ENCODE measurements at regions of chrX and their contacts with region 1.

Region 1: DNA sequence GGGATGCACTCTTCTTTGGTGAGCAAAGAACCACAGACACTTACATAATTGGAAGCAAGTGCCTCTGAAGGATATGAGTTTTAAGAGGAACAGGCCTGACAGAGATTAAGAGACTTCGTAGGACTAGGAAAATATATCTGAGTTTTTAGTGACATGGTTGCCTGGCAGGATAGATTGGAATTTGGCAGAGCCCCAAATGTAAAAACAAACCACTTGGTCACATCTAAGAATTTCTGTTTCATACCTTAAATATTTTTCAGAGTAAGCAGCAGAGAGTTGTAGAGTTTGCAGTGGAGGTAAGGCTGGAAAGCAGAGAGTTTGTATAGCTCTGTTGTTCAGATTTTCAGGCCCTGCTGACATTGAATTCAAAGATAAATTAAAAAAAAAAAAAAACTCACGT is 150.1 kb upstream of the MAGEB2 start:
- DNase-seq: no peak

Region 2: DNA sequence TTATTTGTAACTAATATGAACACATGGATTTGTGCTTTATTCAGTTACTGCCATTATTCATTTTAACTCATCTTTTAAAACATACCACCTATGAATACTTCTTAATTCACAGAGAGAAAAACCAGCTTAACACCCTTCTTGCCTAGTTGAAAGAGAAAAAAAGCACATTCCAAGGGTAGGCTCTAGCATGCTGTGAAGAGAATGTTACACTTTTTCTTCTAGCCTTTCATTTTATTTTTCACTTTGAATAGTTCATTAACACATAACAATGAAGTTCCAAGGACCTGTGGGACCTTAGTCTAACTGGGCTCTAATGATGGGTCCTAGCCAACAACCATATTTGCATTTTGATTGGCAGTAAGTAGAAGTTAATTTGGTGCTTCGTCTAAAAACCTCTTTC is 129.8 kb before region 1 on chrX:
- intact Hi-C with region 1: no loop called
- DNase-seq: no peak

Region 3: DNA sequence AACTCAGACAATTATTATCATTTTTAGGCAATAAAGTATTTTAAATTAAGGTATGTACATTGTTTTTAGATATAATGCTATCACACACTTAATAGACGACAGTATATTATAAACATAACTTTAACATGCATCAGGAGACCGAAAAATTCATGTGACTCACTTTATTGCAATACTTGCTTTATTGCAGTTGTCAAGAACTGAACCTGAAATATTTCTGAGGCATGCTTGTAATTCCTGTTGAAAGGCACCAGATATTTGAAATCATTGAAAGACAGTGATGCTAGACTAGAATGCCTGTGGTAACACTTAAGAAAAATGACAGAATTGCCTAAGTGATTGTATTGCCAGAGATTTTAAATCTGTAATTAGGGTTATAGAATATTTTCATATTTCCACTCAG is 25.5 kb before region 1 on chrX:
- intact Hi-C with region 1: no loop called
- DNase-seq: no peak

Region 4: GRCh38 chrX:30141966-30142365 is 76.7 kb after region 1 on chrX:
- intact Hi-C with region 1: loop called in 1 of 2 experiments (anchors 2 kb)
- DNase-seq: no peak

Measured in posterior vena cava (tissue), 2 donors.